ENCODE measurements at regions of chr2 and their contacts with region 1.

Region 1: DNA sequence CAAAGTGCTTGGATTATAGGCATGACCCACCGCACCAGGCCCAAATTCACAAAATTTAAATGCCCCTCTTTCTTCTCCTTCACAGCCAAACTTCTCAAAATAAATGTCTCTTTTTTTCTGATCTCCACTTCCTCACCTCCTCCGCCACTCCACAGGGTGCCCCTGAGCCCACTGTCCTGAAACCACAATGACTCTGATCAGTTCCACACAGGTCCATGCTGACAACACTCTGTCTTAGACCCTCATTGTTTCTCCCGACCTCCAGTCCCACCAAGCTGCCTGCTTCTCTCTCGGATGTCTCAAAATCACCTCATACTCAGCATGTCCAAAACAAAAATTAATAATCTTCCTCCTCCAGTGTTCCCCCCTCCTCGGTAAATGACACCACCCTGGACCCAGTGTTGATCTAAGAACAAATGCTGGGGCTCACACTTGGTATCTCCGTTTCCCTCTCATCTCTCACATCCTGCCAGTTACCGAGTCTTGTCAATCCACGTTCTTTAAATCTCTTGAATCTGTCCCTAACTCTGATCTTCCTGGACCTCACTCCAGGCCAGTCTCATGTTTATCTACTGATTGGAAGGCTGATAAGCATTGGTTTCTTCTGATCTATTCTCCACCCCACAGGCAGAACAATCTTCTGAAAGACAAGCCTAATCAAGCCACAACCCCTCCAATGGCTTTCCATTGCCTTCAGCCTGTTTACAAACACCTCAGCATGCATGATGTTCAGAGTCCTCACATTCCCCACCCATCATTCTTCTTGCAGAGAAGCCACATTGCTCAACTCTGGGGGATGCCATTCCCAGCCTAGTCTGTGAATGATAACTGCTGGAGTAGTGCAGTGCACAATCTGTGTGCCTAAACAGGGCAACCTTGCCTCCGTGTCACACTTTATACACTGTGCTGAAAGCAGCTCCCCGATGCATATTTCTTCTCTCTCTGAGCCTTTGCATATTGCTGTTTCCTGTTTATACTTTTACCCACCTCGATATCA is 12.4 kb upstream of the ANKRD44 start:
- DNase-seq: peak in 6 of 9 donors; percentile 43 to 65 (median 50)
- ATAC-seq: peak; percentile 76
- H3K4me3 ChIP-seq: peak overlapping the region; percentile 36
- H3K4me3 Mint-ChIP-seq: peak overlapping the region; percentile 68 to 88 (median 76)
- H3K27ac ChIP-seq: peak overlapping the region; percentile 73
- H3K27ac Mint-ChIP-seq: peak overlapping the region; percentile 96 to 99 (median 97)
- H3K4me1 ChIP-seq: peaks cover 33 to 59% of the 10 kb centered on the region in 2 donors
- H3K4me1 Mint-ChIP-seq: peaks cover 43 to 81% (median 71%) of the 10 kb centered on the region in 7 donors
- H3K27me3 ChIP-seq: no peaks in the 10 kb centered on the region
- H3K27me3 Mint-ChIP-seq: no peaks in the 10 kb centered on the region

Region 2: GRCh38 chr2:196725882-196726281 is 597.1 kb before region 1 on chr2:
- CTCF ChIA-PET with region 1: no interaction called
- POLR2A ChIA-PET with region 1: no interaction called
- intact Hi-C with region 1: no loop called
- DNase-seq: no peak
- ATAC-seq: no peak
- H3K4me3 ChIP-seq: no peak overlapping the region
- H3K4me3 Mint-ChIP-seq: no peak overlapping the region
- H3K27ac ChIP-seq: no peak overlapping the region
- H3K27ac Mint-ChIP-seq: peak overlapping the region in 1 of 9 donors; percentile 16
- H3K4me1 ChIP-seq: no peaks in the 10 kb centered on the region
- H3K4me1 Mint-ChIP-seq: peaks cover 0 to 19% (median 0%) of the 10 kb centered on the region in 7 donors
- H3K27me3 ChIP-seq: no peaks in the 10 kb centered on the region
- H3K27me3 Mint-ChIP-seq: peaks cover 0 to 3% (median 0%) of the 10 kb centered on the region in 5 donors

Region 3: GRCh38 chr2:197339496-197340220 is 16.6 kb after region 1 on chr2:
- CTCF ChIA-PET with region 1: interaction called, 3 read pairs
- POLR2A ChIA-PET with region 1: interaction called, 26 read pairs
- intact Hi-C with region 1: loop called in 1 of 2 experiments (anchors 1 kb)
- DNase-seq: no peak
- ATAC-seq: no peak
- H3K4me3 ChIP-seq: no peak overlapping the region
- H3K4me3 Mint-ChIP-seq: peak overlapping the region in 7 of 10 donors; percentile 6 to 65 (median 35)
- H3K27ac ChIP-seq: no peak overlapping the region
- H3K27ac Mint-ChIP-seq: peak overlapping the region in 3 of 9 donors; percentile 7 to 71 (median 17)
- H3K4me1 ChIP-seq: peaks cover 0 to 11% of the 10 kb centered on the region in 2 donors
- H3K4me1 Mint-ChIP-seq: peaks cover 5 to 26% (median 17%) of the 10 kb centered on the region in 7 donors
- H3K27me3 ChIP-seq: no peaks in the 10 kb centered on the region
- H3K27me3 Mint-ChIP-seq: no peaks in the 10 kb centered on the region

Region 4: DNA sequence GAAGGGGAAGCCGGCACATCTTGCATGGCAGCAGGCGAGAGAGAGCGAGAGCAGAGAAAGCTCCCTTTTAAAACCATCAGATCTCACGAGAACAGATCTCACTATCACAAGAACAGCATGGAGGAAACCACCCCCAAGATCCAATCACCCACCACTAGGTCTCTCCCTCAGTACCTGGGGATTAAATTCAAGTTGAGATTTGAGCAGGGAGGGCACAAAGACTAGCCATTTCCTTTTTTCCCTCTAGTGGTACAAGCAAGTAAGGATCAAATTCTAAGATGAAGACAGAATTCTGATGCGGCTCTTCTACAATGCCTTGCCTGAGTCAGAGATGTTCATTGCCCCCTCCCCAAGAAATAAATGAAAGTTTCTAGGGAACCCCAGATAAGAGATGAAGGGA is 33.1 kb after region 1 on chr2:
- CTCF ChIA-PET with region 1: interaction called, 4 read pairs
- POLR2A ChIA-PET with region 1: interaction called, 8 read pairs
- intact Hi-C with region 1: loop called in 1 of 2 experiments (anchors 2 kb)
- DNase-seq: peak in 5 of 9 donors; percentile 25 to 42 (median 39)
- ATAC-seq: peak; percentile 70
- H3K4me3 ChIP-seq: no peak overlapping the region
- H3K4me3 Mint-ChIP-seq: peak overlapping the region in 8 of 10 donors; percentile 6 to 57 (median 30)
- H3K27ac ChIP-seq: no peak overlapping the region
- H3K27ac Mint-ChIP-seq: peak overlapping the region in 7 of 9 donors; percentile 1 to 82 (median 31)
- H3K4me1 ChIP-seq: peaks cover 0 to 10% of the 10 kb centered on the region in 2 donors
- H3K4me1 Mint-ChIP-seq: peaks cover 5 to 35% (median 30%) of the 10 kb centered on the region in 7 donors
- H3K27me3 ChIP-seq: no peaks in the 10 kb centered on the region
- H3K27me3 Mint-ChIP-seq: no peaks in the 10 kb centered on the region

Region 5: GRCh38 chr2:197700960-197701359 is 377.9 kb after region 1 on chr2:
- CTCF ChIA-PET with region 1: no interaction called
- POLR2A ChIA-PET with region 1: no interaction called
- intact Hi-C with region 1: no loop called
- DNase-seq: no peak
- ATAC-seq: no peak
- H3K4me3 ChIP-seq: no peak overlapping the region
- H3K4me3 Mint-ChIP-seq: no peak overlapping the region
- H3K27ac ChIP-seq: no peak overlapping the region
- H3K27ac Mint-ChIP-seq: no peak overlapping the region
- H3K4me1 ChIP-seq: peaks cover 2 to 4% of the 10 kb centered on the region in 2 donors
- H3K4me1 Mint-ChIP-seq: peaks cover 5 to 17% (median 13%) of the 10 kb centered on the region in 7 donors
- H3K27me3 ChIP-seq: no peaks in the 10 kb centered on the region
- H3K27me3 Mint-ChIP-seq: peaks cover 0 to 21% (median 7%) of the 10 kb centered on the region in 5 donors

Region 6: DNA sequence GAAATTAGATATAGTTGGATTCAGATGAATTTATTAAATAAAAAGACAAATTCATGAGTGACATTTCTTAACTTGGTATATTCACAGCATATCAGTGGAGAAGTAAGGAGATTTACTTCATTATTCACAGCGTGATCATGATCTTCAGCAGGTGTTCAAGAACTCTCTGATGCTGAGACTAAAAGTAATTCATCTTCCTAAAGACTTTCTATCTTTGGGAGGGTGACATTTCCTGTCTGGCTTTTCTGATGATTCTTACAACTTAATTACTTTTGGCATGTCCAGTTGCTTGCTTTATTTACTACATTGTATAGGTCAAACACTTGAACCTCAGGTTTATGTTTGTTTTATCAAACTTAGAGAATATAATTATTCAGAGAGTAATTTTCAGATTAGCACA is 705.9 kb after region 1 on chr2:
- CTCF ChIA-PET with region 1: no interaction called
- POLR2A ChIA-PET with region 1: interaction called, 11 read pairs
- intact Hi-C with region 1: no loop called
- DNase-seq: no peak
- ATAC-seq: no peak
- H3K4me3 ChIP-seq: no peak overlapping the region
- H3K4me3 Mint-ChIP-seq: peak overlapping the region in 3 of 10 donors; percentile 7 to 42 (median 9)
- H3K27ac ChIP-seq: no peak overlapping the region
- H3K27ac Mint-ChIP-seq: peak overlapping the region in 3 of 9 donors; percentile 3 to 50 (median 45)
- H3K4me1 ChIP-seq: peaks cover 0 to 22% of the 10 kb centered on the region in 2 donors
- H3K4me1 Mint-ChIP-seq: peaks cover 4 to 76% (median 55%) of the 10 kb centered on the region in 7 donors
- H3K27me3 ChIP-seq: no peaks in the 10 kb centered on the region
- H3K27me3 Mint-ChIP-seq: no peaks in the 10 kb centered on the region

Measured in naive thymus-derived CD4-positive, alpha-beta T cell (primary cell).